Activated CD4-positive, alpha-beta T cell treated with anti-CD3 and anti-CD28 coated beads for 36 hours (primary cell): ENCODE measurements at regions of chr13 and their contacts with region 1.

Region 1: DNA sequence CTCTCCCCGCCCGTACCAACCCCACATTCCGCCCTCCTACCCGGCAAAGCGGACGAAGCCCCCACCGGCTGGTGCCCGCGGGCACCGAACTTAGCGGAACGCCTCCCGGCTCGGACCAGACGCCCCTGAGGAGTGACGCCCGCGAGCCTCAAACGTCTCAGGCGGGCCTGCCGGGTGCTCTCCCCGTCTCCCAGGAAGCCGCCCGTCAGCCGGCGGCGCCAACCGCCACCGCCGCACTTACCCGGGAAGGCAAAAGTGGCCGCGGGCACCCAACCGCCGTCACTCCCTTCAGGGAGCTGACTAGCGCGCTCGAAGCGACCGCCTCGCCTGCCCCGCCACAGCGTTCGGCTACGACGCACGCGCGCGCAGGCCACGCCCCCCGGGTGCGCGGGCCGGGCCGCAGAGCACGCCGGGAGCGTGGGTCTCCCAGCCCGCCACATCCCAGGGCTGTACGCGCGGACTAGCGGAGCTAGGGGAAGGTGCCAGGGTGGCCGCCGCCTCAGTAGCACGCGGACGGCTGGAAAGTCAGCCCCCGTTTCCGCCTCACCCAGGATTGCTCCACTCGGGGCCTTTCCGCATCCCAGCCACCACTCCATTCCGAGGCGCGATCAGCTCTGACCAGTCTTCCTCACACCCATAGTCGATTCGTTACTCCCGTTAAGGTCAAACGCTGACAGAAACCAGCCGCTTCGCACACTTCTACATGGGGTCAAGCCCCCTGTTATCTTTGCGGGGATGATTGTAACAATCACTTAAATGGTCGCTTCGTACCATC is at the start of gene TEX30:
- DNase-seq: peak; percentile 91
- ATAC-seq: peak; percentile 97
- H3K4me3 Mint-ChIP-seq: peak within 1 kb of the TSS; percentile 73
- H3K27ac Mint-ChIP-seq: peak within 1 kb of the TSS; percentile 93
- H3K4me1 Mint-ChIP-seq: peaks cover 48% of the 10 kb centered on the region
- H3K27me3 Mint-ChIP-seq: no peaks in the 10 kb centered on the region
- total RNA-seq, gene TEX30: 21.5 to 25.8 TPM

Region 2: DNA sequence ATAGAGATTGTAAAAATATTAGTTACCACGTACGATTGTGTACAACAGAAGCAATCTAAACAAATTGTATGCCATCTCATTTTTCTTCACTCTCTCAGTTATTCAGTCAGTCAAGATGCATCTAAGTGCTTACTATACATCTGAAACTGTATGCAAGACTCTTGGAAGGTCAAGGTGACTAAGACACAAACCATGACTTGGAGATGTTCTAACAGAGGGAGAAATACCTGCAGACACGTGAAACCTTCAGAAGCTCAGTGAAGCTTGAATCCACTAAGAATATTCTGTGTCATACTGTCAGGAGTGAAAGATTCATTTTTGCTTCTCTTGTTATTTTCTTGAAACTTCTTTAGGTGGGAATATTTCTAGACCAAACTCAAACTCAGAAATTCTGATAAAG is 955.7 kb before region 1 on chr13:
- CTCF ChIA-PET with region 1: no interaction called
- POLR2A ChIA-PET with region 1: no interaction called
- intact Hi-C with region 1: no loop called
- DNase-seq: no peak
- ATAC-seq: no peak
- H3K4me3 Mint-ChIP-seq: no peak overlapping the region
- H3K27ac Mint-ChIP-seq: no peak overlapping the region
- H3K4me1 Mint-ChIP-seq: no peaks in the 10 kb centered on the region
- H3K27me3 Mint-ChIP-seq: peaks cover 3% of the 10 kb centered on the region

Region 3: DNA sequence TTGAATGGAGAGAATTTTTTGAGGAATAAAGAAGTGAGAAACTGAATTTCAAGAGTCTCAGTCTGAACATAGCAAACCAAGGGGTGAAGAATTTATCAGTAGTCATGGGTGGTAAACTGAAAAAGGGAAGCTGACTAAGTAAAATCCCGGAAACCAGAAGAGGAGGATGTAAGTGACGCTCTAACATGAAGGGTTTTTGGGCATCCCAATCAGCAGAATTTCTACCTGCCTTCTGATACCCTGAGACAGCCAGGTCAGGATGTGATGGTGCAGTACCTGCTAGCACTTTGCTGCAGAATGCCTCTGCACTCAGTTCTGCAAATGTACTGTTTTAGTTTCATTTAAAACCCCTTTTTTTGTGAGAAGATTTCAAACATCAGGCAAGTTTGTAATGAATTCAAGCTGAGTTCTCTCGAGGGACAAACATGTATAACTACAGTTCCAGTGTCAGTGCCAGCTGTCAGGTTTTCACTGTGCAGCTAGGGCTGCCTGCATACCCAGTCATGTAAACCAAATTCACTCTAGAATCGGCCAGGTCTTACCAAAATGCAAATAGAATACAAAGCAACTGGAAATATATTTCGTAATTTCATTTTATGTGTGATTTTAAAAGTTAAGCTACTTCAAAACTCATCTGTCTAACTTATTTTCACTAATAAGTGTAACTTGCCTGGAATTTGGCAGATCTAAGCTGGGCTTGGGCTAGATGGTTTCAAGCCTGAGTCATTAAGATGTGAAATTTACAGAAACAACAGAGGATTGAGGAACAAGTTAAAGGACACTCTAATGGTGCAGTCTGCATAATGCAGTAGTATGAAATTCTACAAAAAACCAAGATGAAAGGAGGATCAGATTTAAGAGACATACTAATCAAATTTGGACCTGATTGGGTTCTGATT is 92.5 kb before region 1 on chr13:
- CTCF ChIA-PET with region 1: no interaction called
- POLR2A ChIA-PET with region 1: no interaction called
- intact Hi-C with region 1: loop called in 1 of 2 experiments (anchors 5 kb)
- DNase-seq: no peak
- ATAC-seq: peak; percentile 67
- H3K4me3 Mint-ChIP-seq: no peak overlapping the region
- H3K27ac Mint-ChIP-seq: peak overlapping the region; percentile 61
- H3K4me1 Mint-ChIP-seq: peaks cover 26% of the 10 kb centered on the region
- H3K27me3 Mint-ChIP-seq: no peaks in the 10 kb centered on the region

Region 4: DNA sequence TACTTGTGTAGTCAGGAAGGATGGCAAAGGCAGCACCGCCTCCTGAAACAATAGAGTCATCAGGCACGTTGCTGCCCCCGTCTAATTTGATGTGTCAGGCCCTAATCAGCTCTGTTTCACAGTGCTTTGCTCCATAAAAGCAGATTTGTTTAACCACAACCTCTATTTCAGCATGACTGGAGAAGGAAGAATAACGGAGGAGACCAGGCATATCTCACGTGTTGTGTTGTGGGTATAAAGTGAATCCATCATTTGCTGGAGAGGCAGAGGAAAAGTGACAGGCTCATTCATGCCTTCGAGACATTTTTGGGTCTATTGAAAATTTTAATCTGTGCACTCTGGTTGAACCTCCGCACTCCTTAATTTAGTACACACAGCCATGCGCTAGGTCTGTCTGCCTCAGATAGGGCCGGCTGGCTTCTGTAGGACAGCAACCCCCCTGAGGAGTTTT is 1233.0 kb after region 1 on chr13:
- CTCF ChIA-PET with region 1: no interaction called
- POLR2A ChIA-PET with region 1: no interaction called
- intact Hi-C with region 1: no loop called
- DNase-seq: no peak
- ATAC-seq: no peak
- H3K4me3 Mint-ChIP-seq: no peak overlapping the region
- H3K27ac Mint-ChIP-seq: no peak overlapping the region
- H3K4me1 Mint-ChIP-seq: no peaks in the 10 kb centered on the region
- H3K27me3 Mint-ChIP-seq: no peaks in the 10 kb centered on the region